ENCODE measurements at regions of chr17 and their contacts with region 1.

Region 1: GRCh38 chr17:42720996-42721583 is 23.8 kb downstream of the EZH1 start:
- DNase-seq: no peak

Region 2: GRCh38 chr17:42673885-42674754 is 47.0 kb before region 1 on chr17:
- intact Hi-C with region 1: no loop called
- DNase-seq: peak; percentile 90

Region 3: DNA sequence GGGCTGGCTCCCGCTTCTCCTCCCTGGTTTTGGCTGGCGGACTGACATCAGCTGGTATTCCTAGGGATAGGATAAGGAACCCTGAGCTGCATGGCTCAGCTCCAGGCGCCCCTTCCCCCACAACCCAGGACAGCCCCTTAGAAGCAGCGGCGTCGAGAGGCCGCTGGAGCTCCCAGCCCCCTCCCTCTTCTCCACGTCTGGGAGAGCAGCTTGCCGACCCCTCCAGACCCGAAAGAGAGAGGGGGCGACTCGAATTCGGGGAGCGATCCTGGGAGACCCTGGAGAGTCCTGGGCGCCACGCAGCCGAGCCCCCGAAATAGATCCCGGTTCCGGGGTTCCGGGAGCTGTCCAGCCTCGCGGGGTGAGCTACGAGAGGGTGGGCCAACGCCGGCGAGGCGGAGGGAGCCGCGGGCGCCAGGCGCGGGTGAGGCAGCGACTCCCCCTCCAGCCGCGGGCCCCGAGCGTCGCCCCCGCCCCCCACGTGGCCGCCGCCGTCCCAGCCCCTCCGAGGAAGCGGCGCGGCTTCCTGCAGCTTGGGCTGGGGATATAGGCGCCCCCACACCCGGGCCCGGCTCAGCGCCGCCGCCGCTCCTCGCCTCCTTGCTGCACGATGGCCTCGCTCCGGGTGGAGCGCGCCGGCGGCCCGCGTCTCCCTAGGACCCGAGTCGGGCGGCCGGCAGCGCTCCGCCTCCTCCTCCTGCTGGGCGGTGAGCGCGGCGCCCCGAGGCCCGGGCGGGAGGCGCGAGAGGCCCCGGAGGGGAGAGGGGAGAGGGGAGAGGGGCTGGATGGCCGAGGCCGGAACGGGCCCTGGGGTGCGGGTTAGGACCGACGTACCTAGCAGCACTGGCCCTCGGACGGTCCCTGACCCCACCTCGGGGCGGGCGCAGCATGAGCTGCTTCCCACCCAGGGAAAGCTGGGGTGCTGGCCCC is 39.8 kb after region 1 on chr17 and contains the start of gene RAMP2:
- intact Hi-C with region 1: loop called (anchors 5 kb)
- DNase-seq: peak; percentile 81
- total RNA-seq, gene RAMP2: 46.3 to 56.8 TPM